ENCODE measurements at regions of chr15 and their contacts with region 1.

Region 1: DNA sequence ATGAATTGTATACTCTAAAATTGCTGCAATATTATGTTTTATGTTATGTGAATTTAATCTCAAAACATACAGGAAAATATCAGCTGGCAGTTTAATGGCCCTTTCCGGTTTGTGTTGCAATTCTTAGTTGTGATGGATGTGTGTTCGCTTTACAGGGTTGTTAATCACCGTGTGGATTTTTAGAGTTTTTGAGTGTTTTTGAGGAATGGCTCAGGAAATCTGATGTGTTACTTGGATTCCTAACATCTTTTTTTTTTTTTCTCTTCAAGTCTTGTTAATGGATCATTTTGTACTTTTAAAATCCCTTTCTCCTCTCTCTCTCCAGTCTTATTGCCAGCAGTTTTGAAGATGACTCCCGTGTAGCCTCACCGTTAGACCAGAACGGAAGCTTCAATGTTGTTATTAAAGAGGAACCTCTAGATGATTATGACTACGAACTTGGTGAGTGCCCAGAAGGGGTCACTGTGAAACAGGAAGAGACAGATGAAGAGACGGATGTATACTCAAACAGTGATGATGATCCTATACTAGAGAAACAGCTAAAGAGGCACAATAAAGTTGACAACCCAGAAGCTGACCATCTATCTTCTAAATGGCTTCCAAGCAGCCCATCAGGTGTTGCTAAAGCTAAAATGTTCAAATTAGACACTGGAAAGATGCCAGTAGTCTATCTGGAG is 35.7 kb downstream of the MGA start:
- DNase-seq: peak; percentile 7 to 78 (median 41)
- ATAC-seq: peak; percentile 96
- H3K4me3 ChIP-seq: no peak overlapping the region
- H3K4me3 Mint-ChIP-seq: peak overlapping the region; percentile 29
- H3K27ac ChIP-seq: peak overlapping the region in 1 of 2 experiments; percentile 44
- H3K27ac Mint-ChIP-seq: peak overlapping the region; percentile 69
- H3K4me1 ChIP-seq: peaks cover 22% of the 10 kb centered on the region
- H3K4me1 Mint-ChIP-seq: peaks cover 54% of the 10 kb centered on the region
- H3K27me3 ChIP-seq: no peaks in the 10 kb centered on the region
- H3K27me3 Mint-ChIP-seq: no peaks in the 10 kb centered on the region
- CTCF ChIP-seq: peak; percentile 41

Region 2: GRCh38 chr15:41603941-41604911 is 91.7 kb before region 1 on chr15:
- CTCF ChIA-PET with region 1: interaction called, 6 read pairs
- POLR2A ChIA-PET with region 1: no interaction called
- intact Hi-C with region 1: loop called in 1 of 2 experiments (anchors 1 kb)
- DNase-seq: peak; percentile 22 to 76 (median 59)
- ATAC-seq: peak; percentile 97
- H3K4me3 ChIP-seq: no peak overlapping the region
- H3K4me3 Mint-ChIP-seq: peak overlapping the region; percentile 53
- H3K27ac ChIP-seq: no peak overlapping the region
- H3K27ac Mint-ChIP-seq: no peak overlapping the region
- H3K4me1 ChIP-seq: peaks cover 4% of the 10 kb centered on the region
- H3K4me1 Mint-ChIP-seq: peaks cover 8% of the 10 kb centered on the region
- H3K27me3 ChIP-seq: no peaks in the 10 kb centered on the region
- H3K27me3 Mint-ChIP-seq: peaks cover 12% of the 10 kb centered on the region
- CTCF ChIP-seq: peak; percentile 71

Region 3: GRCh38 chr15:41930221-41930866 is 234.5 kb after region 1 on chr15:
- CTCF ChIA-PET with region 1: no interaction called
- POLR2A ChIA-PET with region 1: no interaction called
- intact Hi-C with region 1: loop called in 1 of 2 experiments (anchors 10 kb)
- DNase-seq: peak in 1 of 9 experiments; percentile 21
- ATAC-seq: no peak
- H3K4me3 ChIP-seq: no peak overlapping the region
- H3K4me3 Mint-ChIP-seq: no peak overlapping the region
- H3K27ac ChIP-seq: no peak overlapping the region
- H3K27ac Mint-ChIP-seq: no peak overlapping the region
- H3K4me1 ChIP-seq: peaks cover 30% of the 10 kb centered on the region
- H3K4me1 Mint-ChIP-seq: peaks cover 24% of the 10 kb centered on the region
- H3K27me3 ChIP-seq: no peaks in the 10 kb centered on the region
- H3K27me3 Mint-ChIP-seq: no peaks in the 10 kb centered on the region
- CTCF ChIP-seq: no peak

Measured in CD8-positive, alpha-beta T cell (primary cell).